Left cardiac atrium (tissue), 4 donors: ENCODE measurements at regions of chr1 and their contacts with region 1.

Region 1: DNA sequence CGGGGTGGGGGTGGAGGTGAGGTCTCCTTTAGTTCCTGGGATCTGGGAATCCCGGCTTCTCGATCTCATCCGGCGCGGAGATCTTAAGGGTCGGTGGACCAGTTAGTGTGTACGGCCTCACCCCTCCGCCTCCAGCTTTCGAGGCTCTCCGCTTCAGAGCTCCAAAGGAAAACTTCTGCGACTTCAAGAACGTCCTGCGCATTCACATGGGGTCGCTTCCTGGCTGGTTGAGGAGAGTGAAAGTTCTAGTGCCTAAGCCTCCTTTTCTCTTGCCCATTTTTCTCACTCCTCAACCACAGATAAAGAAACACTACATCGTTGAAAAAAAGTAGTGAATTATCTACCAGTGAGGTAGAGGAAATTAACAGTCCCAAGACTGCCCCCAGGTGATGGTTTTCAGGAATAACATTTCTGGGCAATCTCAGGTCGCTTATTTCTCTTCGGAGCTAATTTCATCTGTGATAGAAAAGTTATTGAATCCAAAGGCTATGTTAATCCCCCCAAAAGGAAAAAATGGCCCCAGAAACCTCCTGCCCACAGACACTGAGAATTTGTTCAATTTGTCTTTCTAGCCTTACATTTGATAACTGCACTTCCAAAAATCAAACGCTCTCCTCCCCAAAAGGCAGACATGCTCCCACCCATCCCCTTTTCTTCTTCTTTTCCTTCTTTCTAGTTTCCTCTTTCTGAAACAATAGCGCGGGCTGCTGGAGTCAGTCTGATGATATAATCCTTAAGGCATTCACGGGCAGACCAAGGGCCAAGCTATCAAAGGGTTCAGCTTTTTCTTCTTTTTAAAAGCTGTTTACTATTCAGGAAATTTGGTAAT is 20.6 kb upstream of the TBX15 start:
- DNase-seq: no peak
- ATAC-seq: peak; percentile 64 to 74

Region 2: GRCh38 chr1:118151312-118151937 is 857.3 kb before region 1 on chr1:
- intact Hi-C with region 1: loop called (anchors 2 to 10 kb)
- DNase-seq: peak; percentile 48
- ATAC-seq: no peak

Region 3: DNA sequence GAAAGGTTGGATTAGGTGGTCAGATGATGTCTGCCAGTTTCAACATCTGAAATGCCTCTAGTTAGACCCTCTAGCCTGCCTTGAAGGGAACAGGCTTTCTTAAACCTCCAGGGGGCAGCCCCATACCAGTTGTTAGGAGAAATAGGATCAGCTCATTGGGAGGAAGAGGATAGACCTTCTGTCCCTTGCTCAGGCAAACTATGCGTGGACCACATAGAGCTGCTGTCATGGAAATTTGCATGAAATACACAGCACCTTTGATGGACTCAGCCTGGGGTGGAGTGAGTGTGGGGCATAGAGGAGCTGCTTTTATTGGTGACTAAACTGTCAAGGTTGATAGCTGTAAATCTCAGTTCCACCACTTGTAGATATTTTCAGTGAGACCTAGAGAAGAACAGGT is 785.3 kb before region 1 on chr1:
- intact Hi-C with region 1: loop called in 1 of 2 experiments (anchors 5 kb)
- DNase-seq: no peak
- ATAC-seq: peak in 1 of 2 donors; percentile 55

Region 4: DNA sequence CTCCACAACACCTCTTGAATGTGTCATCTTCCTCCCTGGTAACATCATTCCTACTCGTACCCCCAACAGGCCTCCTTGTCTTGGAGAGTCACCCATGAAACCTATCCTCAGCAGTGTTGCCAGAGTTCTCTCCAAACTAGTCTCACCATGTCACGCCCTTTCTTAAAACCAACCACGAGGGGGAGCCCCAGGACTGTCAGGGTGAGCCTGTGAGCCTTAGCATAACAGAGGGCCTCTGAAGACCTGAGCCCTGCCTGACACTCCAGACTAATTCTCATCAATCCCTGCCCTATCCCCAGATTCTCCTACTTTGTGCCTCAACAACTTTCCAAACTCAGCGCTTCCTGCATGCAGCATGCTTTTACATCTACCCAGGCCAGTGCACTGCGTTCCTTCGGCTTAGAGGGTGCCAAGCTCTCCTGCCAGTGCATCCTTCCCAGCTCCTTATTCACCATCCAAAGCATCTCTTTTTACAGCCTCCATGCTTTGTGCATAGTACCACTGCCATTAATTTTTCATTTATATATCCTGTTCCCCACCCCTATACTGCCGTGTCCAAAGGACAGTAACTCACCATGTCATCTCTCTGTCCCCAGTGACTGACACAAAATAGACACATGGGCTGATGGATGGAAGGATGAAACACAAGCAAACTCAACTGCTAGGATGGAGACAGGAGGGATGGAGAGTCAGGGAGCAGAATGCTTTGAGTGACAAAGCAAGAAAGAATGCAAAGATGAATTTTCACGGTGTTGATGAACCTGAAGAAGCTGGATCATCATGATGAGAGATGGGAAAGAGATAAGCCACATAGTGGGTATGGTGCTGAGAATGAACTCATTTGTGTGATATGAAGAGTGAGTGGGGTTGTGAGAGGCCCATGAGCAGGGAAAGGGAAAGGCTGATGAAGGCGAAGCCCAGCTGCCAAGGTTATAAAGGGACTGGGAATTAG is 605.3 kb after region 1 on chr1:
- intact Hi-C with region 1: no loop called
- DNase-seq: peak; percentile 85
- ATAC-seq: peak; percentile 91 to 94